CD14-positive monocyte (primary cell): ENCODE measurements at regions of chr9 and their contacts with region 1.

Region 1: GRCh38 chr9:128504485-128505413 is at the start of gene GLE1:
- DNase-seq: peak; percentile 89
- H3K4me3 ChIP-seq: peak within 1 kb of the TSS; percentile 81 to 99 (median 94)
- H3K4me3 Mint-ChIP-seq: peak within 1 kb of the TSS; percentile 98 to 100
- H3K27ac ChIP-seq: peak within 1 kb of the TSS; percentile 66 to 93
- H3K27ac Mint-ChIP-seq: peak within 1 kb of the TSS; percentile 92 to 98 (median 97)
- H3K4me1 ChIP-seq: peaks cover 17 to 20% of the 10 kb centered on the region in 2 donors
- H3K4me1 Mint-ChIP-seq: peaks cover 16% of the 10 kb centered on the region
- H3K27me3 ChIP-seq: no peaks in the 10 kb centered on the region
- H3K27me3 Mint-ChIP-seq: peaks cover 0 to 1% (median 0%) of the 10 kb centered on the region in 3 donors
- CTCF ChIP-seq: no peak
- polyA plus RNA-seq, gene GLE1: 16.0 to 31.2 (median 22.2) TPM

Region 2: GRCh38 chr9:128552153-128552743 is 47.5 kb after region 1 on chr9 and contains the start of gene SPTAN1:
- intact Hi-C with region 1: loop called in 1 of 2 experiments (anchors 5 kb)
- DNase-seq: peak; percentile 88 to 94 (median 91)
- H3K4me3 ChIP-seq: peak within 1 kb of the TSS; percentile 84 to 90 (median 90)
- H3K4me3 Mint-ChIP-seq: peak within 1 kb of the TSS; percentile 88 to 95
- H3K27ac ChIP-seq: peak within 1 kb of the TSS; percentile 72 to 80
- H3K27ac Mint-ChIP-seq: peak within 1 kb of the TSS; percentile 74 to 97 (median 93)
- H3K4me1 ChIP-seq: peaks cover 25 to 32% of the 10 kb centered on the region in 2 donors
- H3K4me1 Mint-ChIP-seq: peaks cover 24% of the 10 kb centered on the region
- H3K27me3 ChIP-seq: no peaks in the 10 kb centered on the region
- H3K27me3 Mint-ChIP-seq: no peaks in the 10 kb centered on the region
- CTCF ChIP-seq: no peak
- polyA plus RNA-seq, gene SPTAN1: 6.2 to 40.8 (median 8.5) TPM

Region 3: GRCh38 chr9:128653941-128654340 is 149.2 kb after region 1 on chr9:
- intact Hi-C with region 1: no loop called
- DNase-seq: no peak
- H3K4me3 ChIP-seq: no peak overlapping the region
- H3K4me3 Mint-ChIP-seq: no peak overlapping the region
- H3K27ac ChIP-seq: no peak overlapping the region
- H3K27ac Mint-ChIP-seq: peak overlapping the region in 1 of 7 donors; percentile 21
- H3K4me1 ChIP-seq: peaks cover 11 to 14% of the 10 kb centered on the region in 2 donors
- H3K4me1 Mint-ChIP-seq: peaks cover 7% of the 10 kb centered on the region
- H3K27me3 ChIP-seq: no peaks in the 10 kb centered on the region
- H3K27me3 Mint-ChIP-seq: peaks cover 1 to 7% (median 2%) of the 10 kb centered on the region in 3 donors
- CTCF ChIP-seq: no peak

Region 4: GRCh38 chr9:128669786-128670185 is 165.0 kb after region 1 on chr9:
- intact Hi-C with region 1: no loop called
- DNase-seq: no peak
- H3K4me3 ChIP-seq: no peak overlapping the region
- H3K4me3 Mint-ChIP-seq: no peak overlapping the region
- H3K27ac ChIP-seq: no peak overlapping the region
- H3K27ac Mint-ChIP-seq: no peak overlapping the region
- H3K4me1 ChIP-seq: peaks cover 0 to 3% of the 10 kb centered on the region in 2 donors
- H3K4me1 Mint-ChIP-seq: peaks cover 13% of the 10 kb centered on the region
- H3K27me3 ChIP-seq: no peaks in the 10 kb centered on the region
- H3K27me3 Mint-ChIP-seq: no peaks in the 10 kb centered on the region
- CTCF ChIP-seq: no peak

Region 5: DNA sequence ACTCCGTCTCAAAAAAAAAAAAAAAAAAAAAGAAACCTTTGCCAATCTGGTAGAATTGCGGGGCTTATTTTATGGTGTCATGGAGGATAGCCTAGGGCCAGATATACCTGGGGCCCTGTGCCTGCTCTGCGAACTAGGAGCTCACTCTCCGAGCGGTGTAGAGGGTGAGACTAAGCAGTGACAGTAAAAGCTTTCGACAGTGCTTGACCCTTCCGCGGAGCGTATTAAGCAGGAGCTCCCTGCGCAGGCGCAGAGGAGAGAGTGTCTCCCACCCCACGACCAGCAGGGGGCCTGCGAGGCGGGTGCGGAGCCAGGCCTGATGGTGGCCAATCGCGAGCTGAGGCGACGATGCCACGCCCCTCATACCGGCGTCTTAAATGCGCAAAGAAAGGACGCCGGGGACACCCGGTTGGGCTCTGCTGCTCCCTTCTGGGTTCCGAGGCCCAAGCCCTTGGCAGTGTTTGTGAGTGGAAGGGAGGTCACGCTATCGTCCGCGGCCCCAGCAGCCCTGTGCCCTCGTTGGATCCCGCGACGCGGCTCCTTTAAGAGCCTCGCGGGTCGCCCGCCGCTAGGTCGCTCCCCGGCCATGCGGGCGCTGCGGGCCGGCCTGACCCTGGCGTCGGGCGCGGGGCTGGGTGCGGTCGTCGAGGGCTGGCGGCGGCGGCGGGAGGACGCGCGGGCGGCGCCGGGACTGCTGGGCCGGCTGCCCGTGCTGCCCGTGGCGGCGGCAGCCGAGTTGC is 313.5 kb after region 1 on chr9 and contains the start of gene ENDOG:
- intact Hi-C with region 1: no loop called
- DNase-seq: peak; percentile 96 to 98 (median 97)
- H3K4me3 ChIP-seq: peak within 1 kb of the TSS; percentile 51 to 78 (median 58)
- H3K4me3 Mint-ChIP-seq: peak within 1 kb of the TSS; percentile 82 to 92
- H3K27ac ChIP-seq: peak within 1 kb of the TSS; percentile 58 to 63
- H3K27ac Mint-ChIP-seq: peak within 1 kb of the TSS; percentile 79 to 94 (median 90)
- H3K4me1 ChIP-seq: peaks cover 11 to 21% of the 10 kb centered on the region in 2 donors
- H3K4me1 Mint-ChIP-seq: peaks cover 19% of the 10 kb centered on the region
- H3K27me3 ChIP-seq: no peaks in the 10 kb centered on the region
- H3K27me3 Mint-ChIP-seq: peaks cover 3 to 10% (median 9%) of the 10 kb centered on the region in 3 donors
- CTCF ChIP-seq: peak; percentile 96
- polyA plus RNA-seq, gene ENDOG: 7.2 to 24.6 (median 13.0) TPM